Dendritic cell treated with granulocyte-macrophage colony-stimulating factor and Interleukin-4, amounts not matched to agents 40 ng/mL and 50 ng/mL, for 4 days (primary cell): ENCODE measurements at regions of chr12 and their contacts with region 1.

Region 1: GRCh38 chr12:90978117-90978770 is 23.3 kb upstream of the CCER1 start:
- H3K4me3 Mint-ChIP-seq: no peak overlapping the region
- H3K27ac Mint-ChIP-seq: no peak overlapping the region
- H3K4me1 Mint-ChIP-seq: no peaks in the 10 kb centered on the region
- H3K27me3 Mint-ChIP-seq: no peaks in the 10 kb centered on the region

Region 2: DNA sequence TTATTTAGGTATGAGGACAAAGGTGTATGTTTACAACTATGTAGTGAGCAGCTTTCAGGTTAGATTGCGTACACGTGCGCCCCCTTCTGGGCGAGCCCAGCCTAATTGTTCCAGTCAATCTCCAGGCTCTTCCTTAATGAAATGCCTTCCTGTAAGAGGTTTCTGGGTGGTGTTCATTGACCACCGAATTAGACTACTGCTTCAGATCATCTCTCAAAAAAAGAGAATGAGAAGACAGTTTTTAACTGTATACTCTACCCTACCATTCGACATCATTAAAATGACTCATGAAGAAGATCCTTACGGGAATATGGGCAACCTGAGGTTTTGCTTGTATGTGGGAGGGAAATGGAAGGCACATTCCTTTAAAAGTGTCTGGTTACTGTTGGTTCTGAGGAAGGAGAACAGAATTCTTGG is 130.9 kb after region 1 on chr12:
- intact Hi-C with region 1: loop called (anchors 1 kb)
- H3K4me3 Mint-ChIP-seq: no peak overlapping the region
- H3K27ac Mint-ChIP-seq: no peak overlapping the region
- H3K4me1 Mint-ChIP-seq: no peaks in the 10 kb centered on the region
- H3K27me3 Mint-ChIP-seq: no peaks in the 10 kb centered on the region

Region 3: GRCh38 chr12:91326058-91327027 is 348.1 kb after region 1 on chr12:
- intact Hi-C with region 1: loop called (anchors 2 kb)
- H3K4me3 Mint-ChIP-seq: no peak overlapping the region
- H3K27ac Mint-ChIP-seq: no peak overlapping the region
- H3K4me1 Mint-ChIP-seq: no peaks in the 10 kb centered on the region
- H3K27me3 Mint-ChIP-seq: no peaks in the 10 kb centered on the region